AG04449 (cell line): ENCODE measurements at regions of chr3 and their contacts with region 1.

Region 1: DNA sequence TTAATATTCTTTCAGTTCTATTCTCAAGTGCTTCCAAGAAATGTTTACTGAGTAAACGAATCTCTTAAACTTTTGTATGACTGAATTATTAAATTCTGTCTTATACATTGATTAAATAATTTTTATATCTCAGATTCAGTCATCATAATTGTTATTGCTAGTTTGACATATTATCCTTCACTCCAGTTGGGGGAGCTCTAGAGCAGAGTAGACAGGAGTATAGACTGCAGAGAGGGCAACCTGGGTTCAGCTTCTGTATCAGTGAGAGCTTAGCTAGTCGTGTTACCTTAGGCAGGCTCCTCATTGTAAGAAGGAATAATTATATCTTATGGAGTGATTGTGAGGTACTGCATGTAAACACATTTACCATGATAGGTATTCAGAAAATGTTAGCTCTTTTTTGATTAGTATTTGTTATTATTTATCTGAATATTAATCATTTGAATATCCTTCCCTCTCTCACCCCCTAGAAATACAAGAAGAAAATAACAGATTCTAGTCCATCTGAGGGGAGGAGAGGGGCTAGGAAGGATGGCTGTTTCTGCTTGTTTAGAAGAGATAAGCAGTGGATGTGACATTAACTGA is 31.0 kb upstream of the ZCWPW2 start:
- DNase-seq: no peak
- H3K4me3 ChIP-seq: no peak overlapping the region
- CTCF ChIP-seq: peak; percentile 52

Region 2: GRCh38 chr3:27521179-27521871 is 796.2 kb before region 1 on chr3:
- CTCF ChIA-PET with region 1: no interaction called
- POLR2A ChIA-PET with region 1: no interaction called
- DNase-seq: peak; percentile 63
- H3K4me3 ChIP-seq: no peak overlapping the region
- CTCF ChIP-seq: no peak

Region 3: DNA sequence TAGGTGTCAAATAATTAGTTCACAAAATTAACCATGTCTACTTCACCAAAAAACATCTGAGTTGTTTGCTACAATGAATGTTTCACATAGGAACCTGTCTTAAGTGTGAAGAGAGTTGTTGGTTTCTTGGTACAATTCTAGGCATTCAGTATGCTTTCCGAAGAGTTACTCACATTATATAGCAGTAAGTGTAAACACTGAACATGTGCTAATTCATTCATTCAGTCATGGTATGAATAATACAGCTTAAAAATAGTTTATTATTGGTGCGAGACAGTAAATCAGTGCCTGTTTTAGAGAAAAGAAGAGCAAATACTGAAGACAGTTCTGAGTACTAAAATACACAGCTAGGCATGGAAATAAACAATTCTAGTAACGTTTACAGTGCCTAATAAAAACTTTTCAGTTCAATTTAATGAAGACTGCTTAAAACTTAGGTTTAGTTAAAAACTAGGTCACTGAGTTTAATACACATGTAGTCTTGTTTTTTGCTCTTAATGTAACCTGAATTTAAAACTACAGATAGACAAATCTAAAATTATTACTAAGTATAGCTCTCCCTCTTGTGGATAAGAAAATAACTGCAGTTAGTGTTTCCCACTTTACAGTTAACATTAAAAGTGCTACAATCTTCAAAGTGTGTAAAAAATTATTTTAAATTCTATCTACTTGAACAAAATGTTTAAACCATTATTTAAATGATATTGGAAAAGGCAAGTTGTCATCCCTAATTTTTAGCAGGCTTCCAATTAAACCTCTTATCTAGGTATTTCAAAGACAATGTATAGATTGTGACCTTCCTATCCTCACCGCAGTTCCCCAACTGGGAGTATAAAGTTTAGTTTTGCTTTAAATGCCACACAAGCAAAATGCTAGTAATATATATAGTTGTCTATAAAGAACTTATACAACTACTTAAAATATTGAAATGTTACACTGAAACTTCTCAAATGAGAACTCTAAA is 10.9 kb after region 1 on chr3:
- CTCF ChIA-PET with region 1: interaction called, 41 read pairs
- POLR2A ChIA-PET with region 1: no interaction called
- DNase-seq: no peak
- H3K4me3 ChIP-seq: no peak overlapping the region
- CTCF ChIP-seq: peak; percentile 11

Region 4: GRCh38 chr3:28334552-28334951 is 17.0 kb after region 1 on chr3:
- CTCF ChIA-PET with region 1: interaction called, 41 read pairs
- POLR2A ChIA-PET with region 1: no interaction called
- DNase-seq: no peak
- H3K4me3 ChIP-seq: no peak overlapping the region
- CTCF ChIP-seq: no peak